A549 (cell line): ENCODE measurements at regions of chr20 and their contacts with region 1.

Region 1: GRCh38 chr20:49166534-49167449 is 21.3 kb downstream of the STAU1 start:
- DNase-seq: no peak
- ATAC-seq: no peak
- H3K4me3 ChIP-seq: no peak overlapping the region
- H3K27ac ChIP-seq: no peak overlapping the region
- H3K4me1 ChIP-seq: peaks cover 13% of the 10 kb centered on the region
- CTCF ChIP-seq: no peak
- EP300 ChIP-seq: no peak
- POLR2A ChIP-seq: no peak
- RAD21 ChIP-seq: no peak

Region 2: DNA sequence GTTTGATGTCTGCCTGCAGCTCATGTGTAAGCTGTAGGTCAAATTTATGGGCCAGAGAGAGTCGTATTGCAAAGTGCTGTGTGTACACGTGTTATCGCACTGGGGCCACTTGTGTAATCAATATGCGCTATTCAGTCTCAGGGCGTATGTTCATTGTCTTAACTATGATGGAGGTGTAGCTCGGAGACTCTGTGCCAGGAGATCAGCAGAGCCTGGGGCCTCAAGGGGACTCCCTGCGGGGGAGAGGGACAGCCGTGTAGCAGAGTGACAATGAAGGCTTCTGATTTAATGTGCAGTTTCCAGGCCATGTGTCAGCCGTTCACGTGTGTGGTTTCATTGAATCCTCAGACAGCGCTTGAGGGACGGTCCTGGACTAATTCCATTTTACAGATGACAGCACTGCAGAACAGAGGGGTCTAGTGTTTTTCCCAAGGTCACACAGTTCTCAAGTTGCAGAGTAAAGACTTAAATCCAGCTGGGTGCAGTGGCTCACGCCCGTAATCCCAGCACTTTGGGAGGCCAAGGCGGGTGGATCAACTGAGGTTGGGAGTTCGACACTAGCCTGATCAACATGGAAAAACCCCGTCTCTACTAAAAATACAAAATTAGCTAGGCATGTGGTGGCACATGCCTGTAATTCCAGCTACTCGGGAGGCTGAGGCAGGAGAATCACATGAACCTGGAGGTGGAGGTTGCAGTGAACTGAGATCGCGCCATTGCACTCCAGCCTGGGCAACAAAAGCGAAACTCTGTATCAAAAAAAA is 581.6 kb before region 1 on chr20:
- CTCF ChIA-PET with region 1: no interaction called
- POLR2A ChIA-PET with region 1: no interaction called
- DNase-seq: no peak
- ATAC-seq: no peak
- H3K4me3 ChIP-seq: no peak overlapping the region
- H3K27ac ChIP-seq: no peak overlapping the region
- H3K4me1 ChIP-seq: no peaks in the 10 kb centered on the region
- CTCF ChIP-seq: no peak
- EP300 ChIP-seq: no peak
- POLR2A ChIP-seq: no peak
- RAD21 ChIP-seq: no peak

Region 3: DNA sequence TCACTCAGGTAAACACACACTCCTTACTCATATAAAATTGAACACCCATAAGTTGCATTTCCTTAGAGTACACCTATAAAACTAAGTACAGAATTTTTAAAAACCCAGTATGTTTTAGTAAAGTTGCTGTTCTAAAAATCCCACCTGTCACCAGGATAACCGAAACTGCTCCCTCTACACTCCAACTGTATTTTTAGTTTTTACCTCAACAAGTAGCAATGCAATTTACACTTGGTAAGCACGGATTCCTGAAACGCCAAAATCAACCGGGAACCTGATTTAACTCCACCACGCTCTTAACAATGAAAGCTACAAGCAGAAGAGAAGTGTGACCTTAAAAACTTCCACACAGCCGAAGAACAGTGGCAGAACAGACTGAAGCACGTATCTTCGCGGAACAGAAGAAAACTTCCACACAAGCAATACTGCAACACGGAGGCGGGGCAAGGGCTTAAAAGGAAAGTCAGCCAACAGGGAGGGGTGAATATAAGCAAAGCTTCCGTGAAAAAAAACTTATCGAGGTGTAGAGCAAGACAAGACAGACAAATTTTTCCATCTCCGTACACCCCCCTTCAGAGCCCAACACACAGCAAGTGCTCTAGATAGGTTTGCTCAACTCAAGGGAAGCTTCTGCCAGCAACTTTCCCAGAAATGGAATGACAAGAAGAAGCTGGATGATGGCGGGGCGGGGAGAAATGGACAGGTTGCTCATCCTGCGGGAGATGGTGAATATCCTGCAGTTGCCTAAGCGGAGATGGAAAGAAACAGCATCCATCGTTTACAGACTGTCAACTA is 19.9 kb after region 1 on chr20:
- CTCF ChIA-PET with region 1: interaction called, 15 read pairs
- POLR2A ChIA-PET with region 1: no interaction called
- DNase-seq: peak; percentile 44 to 52
- ATAC-seq: peak; percentile 26 to 30; a peak in 5 of 6 replicates
- H3K4me3 ChIP-seq: peak overlapping the region; percentile 93
- H3K27ac ChIP-seq: peak overlapping the region; percentile 98 to 99
- H3K4me1 ChIP-seq: peaks cover 40% of the 10 kb centered on the region
- CTCF ChIP-seq: no peak
- EP300 ChIP-seq: no peak
- POLR2A ChIP-seq: no peak
- RAD21 ChIP-seq: no peak